BJ (cell line): ENCODE measurements at regions of chr11 and their contacts with region 1.

Region 1: GRCh38 chr11:43567396-43567975 is 113.1 kb upstream of the HSD17B12 start:
- DNase-seq: no peak
- H3K4me3 ChIP-seq: no peak overlapping the region
- H3K27me3 ChIP-seq: peaks cover 11% of the 10 kb centered on the region
- CTCF ChIP-seq: peak; percentile 78

Region 2: DNA sequence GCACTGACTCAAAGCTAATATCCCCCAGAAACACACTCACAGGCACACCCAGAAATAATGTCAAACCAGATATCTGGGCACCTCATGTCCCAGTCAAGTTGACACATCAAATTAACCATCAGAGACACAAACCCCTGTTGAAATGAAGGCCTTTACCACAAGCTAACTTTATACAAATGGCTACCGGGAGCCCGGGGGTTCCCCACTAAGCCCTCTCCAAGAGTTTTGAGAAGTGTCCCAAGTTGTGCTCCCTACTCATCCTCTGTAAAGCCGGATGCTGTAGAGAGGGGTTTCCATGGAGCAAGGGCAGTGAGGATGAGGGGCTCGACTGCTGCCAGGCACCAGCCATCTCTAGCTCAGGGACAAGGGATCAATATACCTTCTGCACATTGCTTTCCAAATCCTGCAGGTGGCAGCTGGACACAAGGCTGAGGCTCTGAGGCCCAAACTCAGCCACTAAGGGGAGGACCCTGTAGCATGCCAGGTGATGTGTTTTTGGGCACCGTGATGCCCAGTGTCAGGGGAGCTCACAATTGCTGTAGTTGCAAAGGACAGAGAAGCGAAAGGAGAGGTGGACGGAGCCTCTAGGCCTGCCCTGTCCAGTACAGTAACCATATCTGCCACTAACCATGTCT is 63.1 kb before region 1 on chr11:
- CTCF ChIA-PET with region 1: interaction called, 12 read pairs
- POLR2A ChIA-PET with region 1: no interaction called
- DNase-seq: no peak
- H3K4me3 ChIP-seq: no peak overlapping the region
- H3K27me3 ChIP-seq: no peaks in the 10 kb centered on the region
- CTCF ChIP-seq: peak; percentile 30; the same call in 1 of the 2 replicates